T-cell (primary cell): ENCODE measurements at regions of chr19 and their contacts with region 1.

Region 1: GRCh38 chr19:12777217-12778016 is 2.1 kb upstream of the HOOK2 start:
- DNase-seq: peak; percentile 51 to 90 (median 71)
- ATAC-seq: peak in 3 of 4 experiments; percentile 30 to 31 (median 31)
- H3K4me3 ChIP-seq: peak overlapping the region; percentile 65 to 88
- H3K4me3 Mint-ChIP-seq: peak overlapping the region; percentile 77 to 83 (median 82)
- H3K27ac ChIP-seq: peak overlapping the region; percentile 89
- H3K27ac Mint-ChIP-seq: peak overlapping the region; percentile 88
- H3K4me1 ChIP-seq: peaks cover 13 to 62% of the 10 kb centered on the region in 2 experiments
- H3K4me1 Mint-ChIP-seq: peaks cover 38 to 46% (median 41%) of the 10 kb centered on the region in 3 donors
- H3K27me3 ChIP-seq: no peaks in the 10 kb centered on the region
- H3K27me3 Mint-ChIP-seq: no peaks in the 10 kb centered on the region

Region 2: DNA sequence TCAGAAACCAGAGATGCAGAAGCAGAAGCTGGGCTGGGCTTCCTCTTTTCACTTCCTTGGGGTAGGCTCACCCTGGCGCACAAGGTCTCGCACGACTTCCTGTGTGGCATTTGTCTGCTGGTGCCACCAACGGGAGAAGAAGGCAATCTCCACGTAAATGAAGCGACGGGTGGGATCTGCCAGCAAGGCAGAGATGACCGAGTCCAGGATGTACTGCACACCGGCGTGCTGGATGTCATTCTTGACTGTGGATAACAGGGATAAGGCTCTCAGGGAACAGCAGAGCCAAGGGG is 112.2 kb before region 1 on chr19:
- CTCF ChIA-PET with region 1: no interaction called
- POLR2A ChIA-PET with region 1: no interaction called
- DNase-seq: peak in 34 of 35 experiments; percentile 38 to 77 (median 54)
- ATAC-seq: peak; percentile 35 to 55 (median 52)
- H3K4me3 ChIP-seq: peak overlapping the region; percentile 84 to 89
- H3K4me3 Mint-ChIP-seq: peak overlapping the region; percentile 91 to 97 (median 93)
- H3K27ac ChIP-seq: peak overlapping the region; percentile 82
- H3K27ac Mint-ChIP-seq: peak overlapping the region; percentile 69 to 87
- H3K4me1 ChIP-seq: peaks cover 23 to 56% of the 10 kb centered on the region in 2 experiments
- H3K4me1 Mint-ChIP-seq: peaks cover 46 to 60% (median 46%) of the 10 kb centered on the region in 3 donors
- H3K27me3 ChIP-seq: no peaks in the 10 kb centered on the region
- H3K27me3 Mint-ChIP-seq: no peaks in the 10 kb centered on the region

Region 3: DNA sequence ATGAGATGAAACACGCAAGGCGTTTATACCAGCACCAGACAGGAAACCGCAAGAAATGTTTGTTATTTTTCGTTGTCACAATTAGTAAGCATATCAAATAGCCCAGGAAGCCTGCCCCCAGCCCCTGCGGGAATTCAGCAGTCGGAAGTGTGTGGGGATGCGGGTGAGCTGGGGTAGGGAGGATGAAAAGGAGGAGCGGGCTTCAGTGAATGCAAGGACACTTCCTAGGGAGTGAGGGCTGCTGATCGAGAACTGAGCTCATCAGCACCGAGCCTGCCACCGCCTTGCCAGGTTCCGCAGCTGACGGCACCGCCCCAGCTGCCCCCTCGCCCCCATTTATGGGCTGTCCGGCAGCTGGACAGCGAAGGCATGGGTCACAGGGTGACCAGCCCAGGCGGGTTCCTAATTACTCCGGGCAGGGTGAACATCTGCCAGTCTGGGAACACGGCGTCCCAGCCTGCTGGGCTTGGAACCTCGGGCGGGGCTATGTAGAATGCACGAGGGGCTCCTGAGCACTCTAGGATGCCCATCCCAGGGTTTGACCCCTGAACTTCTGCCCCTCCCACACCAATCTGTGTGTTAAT is 27.4 kb before region 1 on chr19:
- CTCF ChIA-PET with region 1: no interaction called
- POLR2A ChIA-PET with region 1: no interaction called
- DNase-seq: no peak
- ATAC-seq: peak in 3 of 4 experiments; percentile 31 to 41 (median 39)
- H3K4me3 ChIP-seq: no peak overlapping the region
- H3K4me3 Mint-ChIP-seq: peak overlapping the region in 1 of 3 donors; percentile 27
- H3K27ac ChIP-seq: no peak overlapping the region
- H3K27ac Mint-ChIP-seq: peak overlapping the region in 1 of 2 donors; percentile 29
- H3K4me1 ChIP-seq: peaks cover 0 to 11% of the 10 kb centered on the region in 2 experiments
- H3K4me1 Mint-ChIP-seq: peaks cover 4 to 9% (median 7%) of the 10 kb centered on the region in 3 donors
- H3K27me3 ChIP-seq: peaks cover 0 to 47% of the 10 kb centered on the region in 2 experiments
- H3K27me3 Mint-ChIP-seq: peaks cover 21 to 33% of the 10 kb centered on the region in 2 donors

Region 4: GRCh38 chr19:12789904-12790619 is 12.6 kb after region 1 on chr19:
- CTCF ChIA-PET with region 1: interaction called in 1 of 2 experiments, 22 read pairs
- POLR2A ChIA-PET with region 1: interaction called, 9 to 45 read pairs
- DNase-seq: peak; percentile 72 to 95 (median 84)
- ATAC-seq: peak; percentile 25 to 35 (median 28)
- H3K4me3 ChIP-seq: peak overlapping the region; percentile 91 to 100
- H3K4me3 Mint-ChIP-seq: peak overlapping the region; percentile 92
- H3K27ac ChIP-seq: peak overlapping the region; percentile 98
- H3K27ac Mint-ChIP-seq: peak overlapping the region; percentile 96 to 99
- H3K4me1 ChIP-seq: peaks cover 35 to 60% of the 10 kb centered on the region in 2 experiments
- H3K4me1 Mint-ChIP-seq: peaks cover 28 to 38% (median 37%) of the 10 kb centered on the region in 3 donors
- H3K27me3 ChIP-seq: no peaks in the 10 kb centered on the region
- H3K27me3 Mint-ChIP-seq: no peaks in the 10 kb centered on the region